CD4-positive, alpha-beta T cell (primary cell): ENCODE measurements at regions of chr5 and their contacts with region 1.

Region 1: GRCh38 chr5:132688536-132689339 is 14.9 kb downstream of the IL4 start:
- DNase-seq: peak in 4 of 14 experiments; percentile 6 to 63 (median 57)
- ATAC-seq: peak; percentile 33
- H3K4me3 ChIP-seq: no peak overlapping the region
- H3K4me3 Mint-ChIP-seq: peak overlapping the region; percentile 26
- H3K27ac ChIP-seq: no peak overlapping the region
- H3K27ac Mint-ChIP-seq: peak overlapping the region; percentile 65
- H3K4me1 ChIP-seq: peaks cover 13% of the 10 kb centered on the region
- H3K4me1 Mint-ChIP-seq: peaks cover 26% of the 10 kb centered on the region
- H3K27me3 ChIP-seq: no peaks in the 10 kb centered on the region
- H3K27me3 Mint-ChIP-seq: no peaks in the 10 kb centered on the region
- CTCF ChIP-seq: no peak

Region 2: GRCh38 chr5:132073231-132074013 is 615.3 kb before region 1 on chr5 and contains the start of gene CSF2:
- CTCF ChIA-PET with region 1: no interaction called
- POLR2A ChIA-PET with region 1: no interaction called
- intact Hi-C with region 1: loop called in 1 of 2 experiments (anchors 5 kb)
- DNase-seq: peak in 1 of 14 experiments; percentile 46
- ATAC-seq: no peak
- H3K4me3 ChIP-seq: no peak within 1 kb of the TSS
- H3K4me3 Mint-ChIP-seq: no peak within 1 kb of the TSS
- H3K27ac ChIP-seq: no peak within 1 kb of the TSS
- H3K27ac Mint-ChIP-seq: no peak within 1 kb of the TSS
- H3K4me1 ChIP-seq: peaks cover 63% of the 10 kb centered on the region
- H3K4me1 Mint-ChIP-seq: peaks cover 13% of the 10 kb centered on the region
- H3K27me3 ChIP-seq: no peaks in the 10 kb centered on the region
- H3K27me3 Mint-ChIP-seq: no peaks in the 10 kb centered on the region
- CTCF ChIP-seq: no peak
- total RNA-seq, gene CSF2: not detected